GM10248 (cell line): ENCODE measurements at regions of chr15 and their contacts with region 1.

Region 1: DNA sequence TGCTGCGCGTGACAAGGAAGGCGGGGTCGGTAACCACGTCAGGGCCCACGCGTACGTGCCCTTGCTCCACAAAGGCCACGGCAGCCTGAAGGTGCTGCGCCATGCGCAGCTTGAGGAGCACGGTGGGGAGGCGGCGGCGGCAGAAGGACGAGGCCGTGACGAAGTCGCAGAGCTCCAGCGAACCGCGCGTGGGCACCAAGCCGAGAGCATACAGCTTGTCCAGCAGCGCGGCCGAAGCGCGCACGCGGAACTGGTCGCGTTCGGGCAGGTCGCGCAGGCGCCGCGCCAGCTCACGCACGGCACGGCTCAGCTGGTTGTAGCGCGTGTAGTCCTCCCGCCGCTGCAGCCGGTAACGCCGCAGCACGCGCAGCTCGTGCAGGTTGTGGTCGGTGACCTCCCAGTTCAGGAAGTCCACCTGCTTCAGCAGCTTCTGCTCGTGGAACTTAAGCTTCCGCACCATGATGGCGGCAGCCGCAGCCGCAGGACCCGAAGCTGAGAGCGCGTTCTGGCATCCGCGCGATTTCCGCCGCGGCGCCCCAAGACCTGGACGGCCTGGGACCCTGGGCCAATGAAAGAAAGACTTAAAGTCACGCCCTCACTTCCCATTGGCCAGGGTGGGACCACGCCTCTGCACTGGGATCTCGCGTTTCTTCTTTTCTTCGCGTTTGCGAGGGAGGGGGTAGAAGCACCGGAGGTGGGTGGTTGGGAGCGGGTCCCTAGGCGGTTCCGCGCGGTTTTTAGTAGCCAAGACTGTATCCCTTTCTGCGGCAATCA is at the start of gene IMP3:
- DNase-seq: peak; percentile 97
- CTCF ChIP-seq: no peak

Region 2: DNA sequence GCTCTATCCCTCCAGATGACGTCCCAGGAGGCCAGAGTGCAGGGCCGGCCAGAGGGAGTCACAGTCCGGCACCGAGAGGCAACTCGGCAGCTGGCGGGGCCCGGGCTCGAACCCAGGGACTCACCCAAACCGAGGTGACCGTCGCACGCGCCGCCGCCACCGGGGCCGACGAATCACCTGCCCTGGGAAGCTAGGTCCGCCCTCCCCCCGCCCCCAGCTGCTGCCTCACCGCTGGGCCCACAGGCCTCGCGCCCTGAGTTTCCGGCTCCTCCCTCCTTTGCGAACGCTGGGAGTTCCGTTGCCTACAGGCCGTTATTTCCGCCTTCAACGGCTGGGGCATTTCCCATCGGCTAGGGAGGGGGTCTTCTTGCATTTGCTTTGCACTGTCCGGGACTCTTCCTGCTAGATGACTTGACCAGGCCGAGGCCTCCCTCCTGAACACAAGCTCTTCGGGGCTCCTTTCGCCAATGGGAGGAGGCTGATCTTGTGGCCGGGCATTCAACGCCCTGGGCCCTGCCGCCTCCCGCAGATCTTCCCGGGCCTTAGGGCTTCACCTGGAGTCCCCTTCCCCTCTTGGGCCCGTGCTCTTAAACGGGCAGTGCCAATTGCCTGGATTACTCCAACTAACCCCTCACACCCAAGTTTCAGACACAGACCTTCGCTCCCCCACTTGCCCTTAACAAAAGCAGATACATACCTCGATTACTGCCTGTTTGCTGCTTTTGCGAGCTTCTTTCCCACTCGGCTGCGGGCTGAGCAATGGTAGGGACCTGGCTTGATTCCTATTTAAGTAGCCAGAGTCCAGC is 14.2 kb before region 1 on chr15 and contains the start of gene SNUPN:
- CTCF ChIA-PET with region 1: interaction called, 24 read pairs
- POLR2A ChIA-PET with region 1: interaction called, 13 read pairs
- DNase-seq: peak; percentile 99
- CTCF ChIP-seq: no peak